ENCODE measurements at regions of chr20 and their contacts with region 1.

Region 1: DNA sequence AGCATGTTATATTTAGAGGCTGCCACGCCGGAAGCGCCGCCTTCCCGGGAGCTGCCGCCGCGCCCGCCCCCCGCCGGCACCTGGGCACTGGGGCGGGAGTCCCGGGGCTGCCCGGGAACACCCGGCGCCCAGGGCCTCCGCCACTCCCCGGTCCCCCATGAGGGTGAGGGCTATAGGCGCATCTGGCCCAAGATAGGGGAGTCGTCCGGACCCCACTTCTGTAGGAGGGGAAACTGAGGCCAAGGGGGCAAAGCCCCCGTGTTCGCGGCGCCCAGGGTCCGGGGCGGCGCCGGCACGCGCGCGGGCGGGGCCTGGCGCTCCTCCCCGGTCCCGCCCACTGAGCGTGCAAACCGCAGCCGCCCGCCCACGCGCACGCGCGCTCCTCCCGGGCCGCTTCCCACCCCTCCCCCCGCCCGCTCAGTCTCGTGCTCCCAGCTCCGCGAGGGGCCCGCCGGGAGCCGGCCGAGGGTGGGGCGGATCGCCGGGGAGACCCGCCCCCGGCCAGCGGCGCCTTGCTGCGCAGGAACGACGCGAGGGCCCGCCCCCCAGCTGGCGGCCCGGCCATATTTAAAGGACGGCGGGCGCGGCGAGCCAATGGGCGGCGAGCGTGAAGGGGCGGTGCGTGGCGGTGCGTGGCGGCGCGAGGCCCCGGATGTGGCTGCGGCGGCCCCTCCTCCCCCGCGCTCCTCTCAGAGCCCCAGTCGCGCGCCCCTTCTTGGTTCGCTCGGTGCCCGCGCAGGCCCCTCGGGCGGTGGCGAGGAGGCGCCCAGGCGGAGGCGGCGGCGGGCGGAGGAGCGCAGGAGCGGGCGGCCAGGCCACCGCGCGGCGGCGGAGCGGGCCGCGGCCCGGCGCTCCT is at the start of gene LSM14B:
- DNase-seq: peak; percentile 93 to 98
- H3K4me3 ChIP-seq: peak within 1 kb of the TSS; percentile 86 to 87
- H3K27ac ChIP-seq: peak within 1 kb of the TSS; percentile 90 to 95
- H3K4me1 ChIP-seq: peaks cover 0 to 39% (median 36%) of the 10 kb centered on the region in 4 donors
- H3K27me3 ChIP-seq: peaks cover 0 to 11% of the 10 kb centered on the region in 2 donors
- CTCF ChIP-seq: no peak

Region 2: GRCh38 chr20:62143118-62143973 is 21.3 kb after region 1 on chr20 and contains the starts of genes PSMA7 and SS18L1:
- intact Hi-C with region 1: loop called (anchors 2 kb)
- DNase-seq: peak; percentile 80 to 91
- H3K4me3 ChIP-seq: peak within 1 kb of the TSS; percentile 68 to 72
- H3K27ac ChIP-seq: peak within 1 kb of the TSS; percentile 87 to 95
- H3K4me1 ChIP-seq: peaks cover 4 to 38% (median 32%) of the 10 kb centered on the region in 4 donors
- H3K27me3 ChIP-seq: no peaks in the 10 kb centered on the region
- CTCF ChIP-seq: no peak

Measured in tibial artery (tissue), 4 donors.